Psoas muscle (tissue), 8 donors: ENCODE measurements at regions of chrX and their contacts with region 1.

Region 1: DNA sequence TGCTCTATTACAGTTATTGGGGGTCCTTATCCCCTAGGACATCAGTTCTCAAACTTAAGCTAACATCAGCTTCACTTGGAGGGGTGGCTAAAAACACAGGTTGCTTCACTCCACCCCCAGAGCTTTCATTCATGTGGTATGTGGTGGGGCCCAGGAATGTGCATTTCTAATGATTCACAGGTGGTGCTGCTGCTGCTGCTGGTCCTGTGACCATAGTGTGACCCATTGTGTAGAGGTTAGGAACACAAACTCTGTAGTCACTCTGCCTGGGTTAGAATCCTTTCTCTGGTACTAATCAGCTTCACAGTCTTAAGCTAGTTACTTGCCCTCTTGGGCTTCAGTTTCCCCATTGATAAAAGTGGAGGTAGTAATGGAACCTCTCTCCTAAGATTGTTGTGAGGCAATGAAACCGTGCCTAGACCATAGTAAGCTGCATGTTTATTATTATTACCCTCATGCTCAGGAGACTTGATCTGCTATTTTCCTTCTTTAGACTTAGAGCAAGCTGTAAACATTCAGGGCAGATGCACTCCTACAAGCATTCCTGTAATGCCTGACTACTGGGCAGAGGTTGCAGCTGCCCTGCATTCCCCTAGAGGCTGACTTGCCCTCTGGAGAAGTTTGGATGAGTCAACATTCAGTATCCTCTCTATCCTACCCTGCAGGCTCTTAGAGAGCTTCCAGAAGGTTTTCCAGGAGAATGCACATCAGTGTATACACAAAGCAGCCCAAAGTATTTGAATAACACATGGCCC is 94.1 kb upstream of the ACSL4 start:
- DNase-seq: no peak
- ATAC-seq: peak in 1 of 4 donors; percentile 55
- H3K4me3 ChIP-seq: no peak overlapping the region
- H3K27ac ChIP-seq: no peak overlapping the region
- H3K4me1 ChIP-seq: peaks cover 3% of the 10 kb centered on the region
- H3K27me3 ChIP-seq: peaks cover 0 to 3% (median 0%) of the 10 kb centered on the region in 3 donors
- CTCF ChIP-seq: no peak

Region 2: GRCh38 chrX:110509755-110510532 is 682.8 kb after region 1 on chrX:
- intact Hi-C with region 1: loop called in 1 of 2 experiments (anchors 10 kb)
- DNase-seq: no peak
- ATAC-seq: no peak
- H3K4me3 ChIP-seq: no peak overlapping the region
- H3K27ac ChIP-seq: no peak overlapping the region
- H3K4me1 ChIP-seq: no peaks in the 10 kb centered on the region
- H3K27me3 ChIP-seq: peaks cover 0 to 2% (median 0%) of the 10 kb centered on the region in 3 donors
- CTCF ChIP-seq: no peak